Right cardiac atrium (tissue), 5 donors: ENCODE measurements at regions of chr1 and their contacts with region 1.

Region 1: GRCh38 chr1:209989525-209989924 is 51.5 kb downstream of the SYT14 start:
- DNase-seq: no peak
- ATAC-seq: no peak
- H3K4me3 ChIP-seq: no peak overlapping the region
- H3K27ac ChIP-seq: no peak overlapping the region
- H3K4me1 ChIP-seq: no peaks in the 10 kb centered on the region
- H3K27me3 ChIP-seq: no peaks in the 10 kb centered on the region

Region 2: DNA sequence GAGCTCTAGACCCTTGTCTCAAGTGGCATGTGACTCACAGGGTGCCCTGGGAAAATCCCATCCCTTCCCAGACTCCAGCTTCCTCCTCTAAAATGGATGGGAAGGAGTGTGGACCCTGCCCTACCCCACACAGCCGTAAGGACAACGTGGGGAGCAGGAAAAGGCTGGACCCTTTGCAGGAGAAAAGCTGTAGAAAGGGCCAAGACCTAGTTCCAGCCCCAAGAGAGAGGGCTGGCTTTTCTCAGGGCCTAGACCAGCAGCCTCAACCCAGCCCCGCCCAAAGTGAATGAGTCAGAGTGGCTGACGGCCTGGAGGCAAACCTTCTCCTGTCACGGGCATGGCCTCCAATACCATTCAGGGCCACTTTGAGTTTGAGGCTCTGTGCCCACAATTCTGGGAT is 338.4 kb before region 1 on chr1:
- intact Hi-C with region 1: no loop called
- DNase-seq: peak; percentile 85 to 88 (median 87)
- ATAC-seq: peak; percentile 77 to 83
- H3K4me3 ChIP-seq: no peak overlapping the region
- H3K27ac ChIP-seq: no peak overlapping the region
- H3K4me1 ChIP-seq: peaks cover 33% of the 10 kb centered on the region
- H3K27me3 ChIP-seq: no peaks in the 10 kb centered on the region

Region 3: DNA sequence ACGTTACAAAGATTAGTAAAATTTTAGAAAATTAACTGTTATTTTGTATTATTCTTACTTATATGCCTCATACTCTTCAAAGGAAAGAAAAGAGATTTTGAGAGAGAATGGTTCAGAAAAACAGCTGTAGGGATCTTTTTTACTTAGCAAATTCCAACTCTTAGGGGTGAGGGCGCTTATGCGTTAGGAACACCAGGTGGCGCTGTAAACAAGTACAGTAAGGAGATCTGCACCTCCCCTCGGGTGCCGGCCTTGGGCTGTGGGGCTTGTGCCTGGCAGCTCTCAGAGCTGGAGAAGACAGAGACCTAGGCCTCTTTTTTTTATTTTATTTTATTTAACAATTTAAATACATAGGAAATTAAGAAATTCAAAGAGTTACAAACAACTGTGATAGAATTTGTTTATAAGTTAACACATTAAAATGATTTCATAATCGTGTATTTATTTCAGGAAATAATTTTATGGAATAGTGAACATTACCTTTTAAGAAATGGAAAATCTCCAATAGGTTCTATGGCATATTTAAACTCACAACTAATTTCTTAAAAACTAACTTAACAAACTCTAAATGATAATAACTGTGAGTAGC is 129.1 kb before region 1 on chr1:
- intact Hi-C with region 1: loop called (anchors 5 to 10 kb)
- DNase-seq: peak; percentile 77 to 88 (median 81)
- ATAC-seq: peak; percentile 83 to 84
- H3K4me3 ChIP-seq: no peak overlapping the region
- H3K27ac ChIP-seq: no peak overlapping the region
- H3K4me1 ChIP-seq: no peaks in the 10 kb centered on the region
- H3K27me3 ChIP-seq: no peaks in the 10 kb centered on the region